Activated CD4-positive, alpha-beta T cell treated with anti-CD3 and anti-CD28 coated beads, Interleukin-2, amount 10 ng/mL, durations not matched to agents 24 days and 14 days (primary cell): ENCODE measurements at regions of chr2 and their contacts with region 1.

Region 1: GRCh38 chr2:15435474-15435873 is 125.7 kb downstream of the NBAS start:
- DNase-seq: no peak
- H3K4me3 Mint-ChIP-seq: no peak overlapping the region
- H3K27ac Mint-ChIP-seq: no peak overlapping the region
- H3K4me1 Mint-ChIP-seq: peaks cover 2% of the 10 kb centered on the region
- H3K27me3 Mint-ChIP-seq: no peaks in the 10 kb centered on the region

Region 2: GRCh38 chr2:15449556-15450236 is 14.2 kb after region 1 on chr2:
- intact Hi-C with region 1: no loop called
- DNase-seq: no peak
- H3K4me3 Mint-ChIP-seq: no peak overlapping the region
- H3K27ac Mint-ChIP-seq: no peak overlapping the region
- H3K4me1 Mint-ChIP-seq: no peaks in the 10 kb centered on the region
- H3K27me3 Mint-ChIP-seq: no peaks in the 10 kb centered on the region

Region 3: DNA sequence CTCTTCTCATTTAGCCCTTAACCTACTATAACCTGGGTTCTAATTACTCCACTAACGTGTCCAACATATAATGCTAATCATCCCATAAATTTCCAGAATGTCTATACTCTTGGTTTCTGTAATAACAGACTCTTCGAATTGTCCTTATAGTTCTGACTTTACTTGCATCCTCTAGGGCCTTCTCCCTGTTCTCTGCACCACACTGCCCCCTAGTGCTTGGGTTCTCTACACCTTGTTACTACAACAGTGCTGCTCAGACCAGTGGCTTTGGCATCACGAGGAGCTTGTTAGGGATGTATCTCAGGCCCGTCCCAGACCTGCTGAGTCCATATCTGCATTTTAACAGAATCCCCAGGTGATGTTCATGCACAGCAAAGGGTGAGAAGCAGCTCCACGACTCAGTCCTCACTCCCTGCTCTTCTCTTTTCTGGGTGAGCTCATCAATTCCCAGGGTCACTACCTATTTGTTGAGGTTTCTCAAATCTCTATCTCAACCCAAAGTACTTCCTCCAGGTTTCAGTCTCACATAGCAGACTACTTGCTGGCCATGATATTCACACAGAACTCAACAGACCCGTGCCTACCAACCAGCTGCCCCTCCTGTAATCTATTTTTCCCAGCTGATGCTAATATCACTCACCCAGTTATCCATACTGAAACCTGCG is 141.7 kb after region 1 on chr2:
- intact Hi-C with region 1: loop called (anchors 1 kb)
- DNase-seq: peak; percentile 96
- H3K4me3 Mint-ChIP-seq: no peak overlapping the region
- H3K27ac Mint-ChIP-seq: no peak overlapping the region
- H3K4me1 Mint-ChIP-seq: no peaks in the 10 kb centered on the region
- H3K27me3 Mint-ChIP-seq: no peaks in the 10 kb centered on the region